ENCODE measurements at regions of chr2 and their contacts with region 1.

Region 1: GRCh38 chr2:197434541-197435513 is at the start of gene SF3B1:
- DNase-seq: peak; percentile 96 to 97
- ATAC-seq: peak; percentile 92 to 96
- H3K4me3 ChIP-seq: peak within 1 kb of the TSS; percentile 92 to 99 (median 98)
- H3K27ac ChIP-seq: peak within 1 kb of the TSS; percentile 99 to 100 (median 99)
- H3K4me1 ChIP-seq: peaks cover 36 to 47% of the 10 kb centered on the region in 2 donors
- H3K27me3 ChIP-seq: no peaks in the 10 kb centered on the region
- CTCF ChIP-seq: no peak
- POLR2A ChIP-seq: peak; percentile 87 to 93
- total RNA-seq, gene SF3B1: 137 to 297 (median 158) TPM

Region 2: DNA sequence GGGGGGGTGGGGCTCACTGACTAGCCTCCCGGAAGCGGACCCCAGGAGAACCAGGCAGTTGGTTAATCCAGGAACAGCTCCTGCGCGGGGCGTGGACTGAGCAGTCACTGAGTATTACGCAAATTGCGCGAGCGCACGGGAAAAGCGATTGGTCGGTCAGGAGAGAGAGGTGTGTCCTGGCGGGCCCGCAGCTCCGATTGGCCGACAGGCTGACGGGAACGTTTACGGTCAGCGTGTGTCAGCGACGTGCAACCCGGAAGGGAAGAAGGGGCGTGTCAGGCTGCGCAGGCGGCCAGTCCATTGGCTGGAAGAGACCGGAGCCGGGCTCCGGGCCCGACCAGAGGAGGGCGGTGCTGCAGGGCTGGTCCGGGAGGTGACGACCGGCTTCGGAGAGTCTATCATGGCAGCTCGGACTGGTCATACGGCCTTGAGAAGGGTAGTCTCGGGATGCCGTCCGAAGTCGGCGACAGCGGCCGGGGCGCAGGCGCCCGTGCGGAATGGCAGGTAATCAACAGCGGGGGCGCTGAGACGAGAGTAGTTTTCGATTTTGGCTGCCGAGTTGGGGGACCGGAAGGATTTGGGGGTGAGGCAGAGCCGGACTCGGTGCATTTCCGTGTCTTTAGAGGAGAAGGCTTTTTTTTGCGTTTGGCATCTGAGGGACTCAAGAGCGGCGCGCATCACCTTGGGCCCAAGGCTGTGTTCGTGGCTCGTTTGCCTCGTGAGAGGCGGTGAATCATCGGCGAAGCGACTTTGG is 18.5 kb after region 1 on chr2 and contains the start of gene COQ10B:
- in situ Hi-C with region 1: no loop called
- intact Hi-C with region 1: loop called (anchors 1 kb)
- DNase-seq: peak; percentile 100
- ATAC-seq: peak; percentile 91 to 95
- H3K4me3 ChIP-seq: peak within 1 kb of the TSS; percentile 78 to 94 (median 84)
- H3K27ac ChIP-seq: peak within 1 kb of the TSS; percentile 93 to 100 (median 98)
- H3K4me1 ChIP-seq: peaks cover 11 to 19% of the 10 kb centered on the region in 2 donors
- H3K27me3 ChIP-seq: no peaks in the 10 kb centered on the region
- CTCF ChIP-seq: peak in 4 of 5 experiments; percentile 10 to 52 (median 30)
- POLR2A ChIP-seq: peak; percentile 89 to 91
- total RNA-seq, gene COQ10B: 7.4 to 21.5 (median 13.7) TPM

Region 3: GRCh38 chr2:197499594-197500526 is 65.0 kb after region 1 on chr2 and contains the starts of genes HSPD1 and HSPE1:
- in situ Hi-C with region 1: no loop called
- intact Hi-C with region 1: loop called (anchors 1 kb)
- DNase-seq: peak; percentile 96
- ATAC-seq: peak; percentile 86 to 91
- H3K4me3 ChIP-seq: peak within 1 kb of the TSS; percentile 81 to 89 (median 84)
- H3K27ac ChIP-seq: peak within 1 kb of the TSS; percentile 96 to 98 (median 97)
- H3K4me1 ChIP-seq: peaks cover 38 to 45% of the 10 kb centered on the region in 2 donors
- H3K27me3 ChIP-seq: no peaks in the 10 kb centered on the region
- CTCF ChIP-seq: peak in 3 of 5 experiments; percentile 25 to 44 (median 26)
- POLR2A ChIP-seq: peak; percentile 95
- total RNA-seq, gene HSPD1: 82.0 to 104 (median 88.2) TPM
- total RNA-seq, gene HSPE1: 43.2 to 122 (median 88.0) TPM

Region 4: DNA sequence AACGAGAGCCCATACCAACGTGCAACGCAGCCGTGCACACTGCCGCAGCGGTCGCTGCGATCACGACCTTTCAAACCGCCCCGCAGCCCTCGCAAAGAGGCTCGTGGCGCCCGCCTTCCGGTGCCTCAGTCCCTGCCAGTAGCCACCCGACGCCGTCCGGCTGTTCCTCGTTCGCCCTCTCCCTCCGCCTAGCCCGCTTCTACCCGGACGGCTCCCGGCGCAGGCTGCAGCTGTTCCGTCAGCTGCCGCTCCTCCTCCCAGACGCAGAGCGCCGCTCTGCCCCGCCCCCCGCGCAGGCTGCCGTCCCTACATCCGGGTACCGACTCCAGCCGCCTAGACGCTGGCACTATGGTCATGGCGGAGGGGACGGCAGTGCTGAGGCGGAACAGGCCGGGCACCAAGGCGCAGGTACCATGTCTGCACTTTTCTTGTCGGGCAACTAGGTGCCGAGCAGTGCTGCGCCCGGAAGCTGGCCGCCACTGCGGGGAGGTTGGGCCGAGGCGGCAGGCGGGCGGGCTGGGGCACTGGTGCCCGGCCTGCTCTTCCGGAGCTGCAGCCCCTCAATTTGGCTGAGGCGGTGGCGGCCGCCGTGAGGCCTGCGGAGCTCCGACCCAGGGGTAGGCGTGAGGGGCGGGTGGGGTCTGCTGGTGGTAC is 81.0 kb after region 1 on chr2 and contains the start of gene MOB4:
- in situ Hi-C with region 1: loop called in 1 of 4 experiments (anchors 10 kb)
- intact Hi-C with region 1: loop called (anchors 2 kb)
- DNase-seq: peak; percentile 95
- ATAC-seq: peak; percentile 93 to 95
- H3K4me3 ChIP-seq: peak within 1 kb of the TSS; percentile 70 to 100 (median 86)
- H3K27ac ChIP-seq: peak within 1 kb of the TSS; percentile 93 to 100 (median 95)
- H3K4me1 ChIP-seq: peaks cover 19 to 26% of the 10 kb centered on the region in 2 donors
- H3K27me3 ChIP-seq: no peaks in the 10 kb centered on the region
- CTCF ChIP-seq: no peak
- POLR2A ChIP-seq: peak; percentile 95 to 97
- total RNA-seq, gene MOB4: 29.3 to 41.3 (median 38.2) TPM

Region 5: DNA sequence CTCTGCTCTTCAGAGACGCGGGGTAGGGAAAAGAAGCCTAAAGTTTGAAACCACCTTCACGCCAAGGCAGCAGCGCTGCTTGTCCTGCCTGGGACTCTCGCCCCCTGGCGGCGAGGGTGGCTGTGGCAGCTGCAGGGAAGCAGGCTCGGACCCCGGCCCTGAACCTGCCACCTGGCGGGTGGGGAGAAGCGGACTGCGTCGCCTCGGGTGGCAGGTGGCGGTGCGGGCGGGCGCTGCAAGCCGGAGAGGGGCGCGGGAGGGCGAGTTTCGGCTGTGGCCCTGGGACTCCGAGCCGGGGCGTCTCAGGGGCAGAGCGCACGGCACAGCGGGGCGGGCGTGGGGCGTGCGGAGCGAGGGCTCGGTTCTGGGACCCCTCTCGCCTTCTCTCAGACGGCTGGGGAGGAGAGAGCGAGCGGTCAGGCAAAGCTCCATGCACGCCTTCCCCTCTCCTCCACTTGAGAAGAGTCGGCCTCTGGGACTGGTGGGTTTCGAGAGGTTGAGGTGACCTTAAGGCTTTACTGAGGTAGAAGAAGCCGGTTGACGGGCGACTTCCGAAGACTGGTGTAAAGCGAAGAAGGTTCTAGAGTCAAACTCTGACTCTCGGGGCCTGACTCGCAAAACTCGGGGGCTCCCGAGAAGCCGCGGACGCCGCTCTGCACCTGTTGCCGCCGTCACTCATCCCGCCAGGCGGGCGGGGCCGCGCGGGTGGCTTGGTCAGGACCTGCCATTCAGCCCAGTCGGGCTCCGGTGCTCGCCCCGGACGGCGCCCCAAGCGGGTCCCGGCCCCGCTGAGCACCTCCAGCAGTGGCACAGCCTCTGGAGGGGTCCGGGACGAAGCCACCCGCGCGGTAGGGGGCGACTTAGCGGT is 351.4 kb after region 1 on chr2:
- in situ Hi-C with region 1: no loop called
- intact Hi-C with region 1: loop called (anchors 10 kb)
- DNase-seq: peak; percentile 53 to 81
- ATAC-seq: peak; percentile 93 to 94
- H3K4me3 ChIP-seq: peak overlapping the region; percentile 65 to 86 (median 74)
- H3K27ac ChIP-seq: peak overlapping the region; percentile 80 to 95 (median 90)
- H3K4me1 ChIP-seq: peaks cover 4 to 14% of the 10 kb centered on the region in 2 donors
- H3K27me3 ChIP-seq: no peaks in the 10 kb centered on the region
- CTCF ChIP-seq: peak; percentile 35 to 75 (median 72)
- POLR2A ChIP-seq: peak; percentile 22 to 35

Region 6: DNA sequence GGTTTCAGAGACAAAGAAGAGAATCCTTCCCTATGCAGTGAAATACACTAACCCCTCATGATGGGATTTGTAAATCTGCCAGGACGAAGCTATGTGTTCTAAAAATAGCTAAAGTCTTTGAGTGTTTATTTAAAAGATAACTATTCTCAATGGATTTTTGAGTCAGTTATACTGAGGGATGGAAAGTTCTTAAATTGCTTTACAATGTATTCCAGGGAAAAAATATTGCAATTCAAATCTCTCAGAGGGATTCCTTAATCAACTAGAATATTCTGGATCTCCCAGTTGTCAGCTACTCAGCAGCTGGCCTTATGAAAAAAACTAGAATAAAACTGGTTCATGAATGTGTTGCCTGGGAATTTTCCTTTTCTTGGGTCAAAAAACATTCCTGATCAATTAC is 681.9 kb after region 1 on chr2:
- in situ Hi-C with region 1: no loop called
- intact Hi-C with region 1: no loop called
- DNase-seq: no peak
- ATAC-seq: peak in 1 of 2 donors; percentile 12
- H3K4me3 ChIP-seq: no peak overlapping the region
- H3K27ac ChIP-seq: no peak overlapping the region
- H3K4me1 ChIP-seq: peaks cover 15 to 32% of the 10 kb centered on the region in 2 donors
- H3K27me3 ChIP-seq: no peaks in the 10 kb centered on the region
- CTCF ChIP-seq: no peak
- POLR2A ChIP-seq: no peak